Natural killer cell (primary cell): ENCODE measurements at regions of chr22 and their contacts with region 1.

Region 1: GRCh38 chr22:19909350-19910179 is 32.0 kb upstream of the COMT start:
- DNase-seq: peak; percentile 73 to 90
- ATAC-seq: peak; percentile 84 to 96 (median 92)
- H3K4me3 ChIP-seq: no peak overlapping the region
- H3K4me3 Mint-ChIP-seq: no peak overlapping the region
- H3K27ac ChIP-seq: no peak overlapping the region
- H3K27ac Mint-ChIP-seq: peak overlapping the region; percentile 61 to 83
- H3K4me1 ChIP-seq: no peaks in the 10 kb centered on the region
- H3K4me1 Mint-ChIP-seq: peaks cover 6 to 8% of the 10 kb centered on the region in 2 donors
- H3K27me3 ChIP-seq: no peaks in the 10 kb centered on the region
- H3K27me3 Mint-ChIP-seq: no peaks in the 10 kb centered on the region
- CTCF ChIP-seq: peak; percentile 68

Region 2: GRCh38 chr22:19730655-19731360 is 178.8 kb before region 1 on chr22:
- intact Hi-C with region 1: loop called (anchors 1 kb)
- DNase-seq: peak; percentile 83 to 88
- ATAC-seq: peak; percentile 87 to 98 (median 94)
- H3K4me3 ChIP-seq: peak overlapping the region; percentile 20
- H3K4me3 Mint-ChIP-seq: peak overlapping the region; percentile 87
- H3K27ac ChIP-seq: no peak overlapping the region
- H3K27ac Mint-ChIP-seq: peak overlapping the region in 1 of 2 donors; percentile 26
- H3K4me1 ChIP-seq: peaks cover 10% of the 10 kb centered on the region
- H3K4me1 Mint-ChIP-seq: peaks cover 0 to 6% of the 10 kb centered on the region in 2 donors
- H3K27me3 ChIP-seq: peaks cover 2% of the 10 kb centered on the region
- H3K27me3 Mint-ChIP-seq: peaks cover 0 to 8% of the 10 kb centered on the region in 2 donors
- CTCF ChIP-seq: peak; percentile 97

Region 3: GRCh38 chr22:19921544-19922081 is 12.0 kb after region 1 on chr22:
- intact Hi-C with region 1: no loop called
- DNase-seq: no peak
- ATAC-seq: no peak
- H3K4me3 ChIP-seq: no peak overlapping the region
- H3K4me3 Mint-ChIP-seq: no peak overlapping the region
- H3K27ac ChIP-seq: no peak overlapping the region
- H3K27ac Mint-ChIP-seq: no peak overlapping the region
- H3K4me1 ChIP-seq: no peaks in the 10 kb centered on the region
- H3K4me1 Mint-ChIP-seq: no peaks in the 10 kb centered on the region
- H3K27me3 ChIP-seq: no peaks in the 10 kb centered on the region
- H3K27me3 Mint-ChIP-seq: no peaks in the 10 kb centered on the region
- CTCF ChIP-seq: no peak

Region 4: GRCh38 chr22:19974241-19974861 is 64.8 kb after region 1 on chr22:
- intact Hi-C with region 1: no loop called
- DNase-seq: peak; percentile 42 to 51
- ATAC-seq: peak; percentile 66 to 70 (median 68)
- H3K4me3 ChIP-seq: no peak overlapping the region
- H3K4me3 Mint-ChIP-seq: no peak overlapping the region
- H3K27ac ChIP-seq: peak overlapping the region; percentile 63
- H3K27ac Mint-ChIP-seq: peak overlapping the region; percentile 91 to 92
- H3K4me1 ChIP-seq: peaks cover 64% of the 10 kb centered on the region
- H3K4me1 Mint-ChIP-seq: peaks cover 40 to 53% of the 10 kb centered on the region in 2 donors
- H3K27me3 ChIP-seq: no peaks in the 10 kb centered on the region
- H3K27me3 Mint-ChIP-seq: no peaks in the 10 kb centered on the region
- CTCF ChIP-seq: no peak